ENCODE measurements at regions of chr1 and their contacts with region 1.

Region 1: DNA sequence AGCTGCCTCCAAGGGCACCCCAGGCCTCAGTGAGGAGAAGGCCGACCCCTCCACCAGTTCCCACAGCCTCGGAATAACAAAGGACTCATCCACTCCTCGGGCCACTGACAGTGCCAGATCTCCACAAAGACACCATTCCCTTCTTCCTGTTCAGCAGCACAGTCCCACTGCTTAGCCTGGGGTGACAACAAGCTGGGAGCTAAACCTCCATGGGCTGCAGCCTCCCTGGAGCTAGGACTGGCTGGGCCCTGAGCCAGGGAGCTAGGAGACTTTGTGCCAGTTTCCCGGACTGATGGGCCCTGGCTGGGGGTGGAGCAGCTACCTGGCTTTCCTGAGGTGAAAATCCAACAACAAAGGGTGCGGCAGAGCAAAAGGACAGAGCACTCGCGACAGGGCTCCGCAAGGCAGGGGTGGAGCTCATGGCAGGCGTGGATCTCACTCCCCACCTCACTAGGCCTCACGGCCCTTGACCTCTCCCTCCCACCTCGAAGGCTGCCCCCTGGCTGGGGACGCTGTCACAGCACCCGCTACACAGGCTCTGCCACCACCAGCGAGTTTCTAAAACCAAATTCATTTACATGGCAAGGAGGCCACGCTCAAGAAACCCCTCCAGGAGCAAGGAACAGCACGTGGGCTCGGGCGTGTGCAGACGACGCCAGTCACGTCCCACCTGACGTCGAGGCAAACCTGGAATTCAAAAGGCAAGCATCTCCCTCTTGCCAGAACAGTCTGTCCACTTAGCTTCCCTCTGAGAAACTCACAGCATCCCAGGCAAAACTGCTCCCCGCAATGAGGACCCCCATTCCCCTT is 13.8 kb downstream of the SLC35E2B start:
- DNase-seq: peak in 1 of 2 experiments; percentile 84
- H3K4me3 ChIP-seq: no peak overlapping the region
- H3K27ac ChIP-seq: peak overlapping the region; percentile 36
- H3K4me1 ChIP-seq: peaks cover 0 to 20% (median 13%) of the 10 kb centered on the region in 4 experiments; a peak in 6 of 7 replicates
- H3K27me3 ChIP-seq: no peaks in the 10 kb centered on the region
- CTCF ChIP-seq: peak; percentile 55 to 81 (median 78)
- EP300 ChIP-seq: no peak
- POLR2A ChIP-seq: no peak
- RAD21 ChIP-seq: peak in 1 of 2 experiments; percentile 20; a peak in 2 of 4 replicates

Region 2: GRCh38 chr1:1605034-1605591 is 73.7 kb before region 1 on chr1:
- CTCF ChIA-PET with region 1: no interaction called
- POLR2A ChIA-PET with region 1: no interaction called
- DNase-seq: peak in 1 of 2 experiments; percentile 51
- H3K4me3 ChIP-seq: no peak overlapping the region
- H3K27ac ChIP-seq: no peak overlapping the region
- H3K4me1 ChIP-seq: peaks cover 0 to 4% (median 2%) of the 10 kb centered on the region in 4 experiments; a peak in 4 of 7 replicates
- H3K27me3 ChIP-seq: peaks cover 7 to 20% (median 16%) of the 10 kb centered on the region in 4 experiments
- CTCF ChIP-seq: no peak
- EP300 ChIP-seq: no peak
- POLR2A ChIP-seq: no peak
- RAD21 ChIP-seq: no peak

Region 3: DNA sequence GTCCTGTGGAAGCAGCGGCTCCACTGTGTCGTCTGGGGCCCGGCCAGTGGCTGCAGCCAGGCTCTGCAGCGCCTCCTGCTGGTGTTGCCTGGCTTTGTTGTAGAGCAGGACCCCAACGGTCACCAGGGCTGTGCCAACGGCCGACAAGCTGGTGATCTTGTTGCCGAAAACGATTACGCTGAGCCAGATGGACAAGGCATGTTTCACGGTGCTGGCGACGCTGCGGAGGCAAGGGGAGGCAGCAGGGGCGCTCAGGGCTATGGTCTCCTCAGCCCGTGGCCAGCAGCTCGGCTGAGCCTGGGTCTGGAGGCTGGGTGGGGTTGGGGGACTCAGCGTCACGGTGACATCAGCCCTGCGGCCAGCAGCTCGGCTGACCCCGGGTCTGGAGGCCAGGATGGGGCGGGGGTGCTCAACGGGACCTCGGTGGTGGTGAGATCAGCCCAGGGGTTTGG is 13.0 kb before region 1 on chr1:
- CTCF ChIA-PET with region 1: interaction called, 24 read pairs
- POLR2A ChIA-PET with region 1: interaction called, 5 read pairs
- DNase-seq: peak in 1 of 2 experiments; percentile 88
- H3K4me3 ChIP-seq: no peak overlapping the region
- H3K27ac ChIP-seq: no peak overlapping the region
- H3K4me1 ChIP-seq: no peaks in the 10 kb centered on the region
- H3K27me3 ChIP-seq: no peaks in the 10 kb centered on the region
- CTCF ChIP-seq: peak; percentile 62 to 85 (median 75)
- EP300 ChIP-seq: no peak
- POLR2A ChIP-seq: no peak
- RAD21 ChIP-seq: peak; percentile 46 to 55

Region 4: GRCh38 chr1:1847061-1847850 is 168.5 kb after region 1 on chr1:
- CTCF ChIA-PET with region 1: no interaction called
- POLR2A ChIA-PET with region 1: no interaction called
- DNase-seq: no peak
- H3K4me3 ChIP-seq: no peak overlapping the region
- H3K27ac ChIP-seq: no peak overlapping the region
- H3K4me1 ChIP-seq: peaks cover 0 to 6% (median 1%) of the 10 kb centered on the region in 4 experiments; a peak in 3 of 7 replicates
- H3K27me3 ChIP-seq: no peaks in the 10 kb centered on the region
- CTCF ChIP-seq: no peak
- EP300 ChIP-seq: no peak
- POLR2A ChIP-seq: no peak
- RAD21 ChIP-seq: no peak

Region 5: GRCh38 chr1:1943834-1944570 is 265.2 kb after region 1 on chr1:
- CTCF ChIA-PET with region 1: no interaction called
- POLR2A ChIA-PET with region 1: no interaction called
- DNase-seq: peak in 1 of 2 experiments; percentile 91
- H3K4me3 ChIP-seq: peak overlapping the region in 3 of 4 experiments; percentile 28 to 46 (median 42); a peak in 5 of 8 replicates
- H3K27ac ChIP-seq: no peak overlapping the region
- H3K4me1 ChIP-seq: peaks cover 0 to 2% (median 0%) of the 10 kb centered on the region in 4 experiments; a peak in 2 of 7 replicates
- H3K27me3 ChIP-seq: no peaks in the 10 kb centered on the region
- CTCF ChIP-seq: peak in 2 of 3 experiments; percentile 70 to 88; a peak in 3 of 4 replicates
- EP300 ChIP-seq: no peak
- POLR2A ChIP-seq: no peak
- RAD21 ChIP-seq: peak; percentile 46 to 57